ENCODE measurements at regions of chr16 and their contacts with region 1.

Region 1: GRCh38 chr16:4271176-4272066 is 1.4 kb downstream of the TFAP4 start:
- DNase-seq: peak; percentile 84
- ATAC-seq: peak; percentile 80
- H3K4me3 ChIP-seq: peak overlapping the region; percentile 90
- H3K27ac ChIP-seq: peak overlapping the region; percentile 96
- H3K4me1 ChIP-seq: peaks cover 15% of the 10 kb centered on the region
- H3K27me3 ChIP-seq: no peaks in the 10 kb centered on the region
- CTCF ChIP-seq: no peak

Region 2: GRCh38 chr16:4220358-4220757 is 51.1 kb before region 1 on chr16:
- CTCF ChIA-PET with region 1: no interaction called
- POLR2A ChIA-PET with region 1: no interaction called
- intact Hi-C with region 1: no loop called
- DNase-seq: no peak
- ATAC-seq: no peak
- H3K4me3 ChIP-seq: no peak overlapping the region
- H3K27ac ChIP-seq: no peak overlapping the region
- H3K4me1 ChIP-seq: no peaks in the 10 kb centered on the region
- H3K27me3 ChIP-seq: no peaks in the 10 kb centered on the region
- CTCF ChIP-seq: no peak

Region 3: GRCh38 chr16:4303872-4304725 is 32.7 kb after region 1 on chr16:
- CTCF ChIA-PET with region 1: no interaction called
- POLR2A ChIA-PET with region 1: interaction called, 14 read pairs
- intact Hi-C with region 1: no loop called
- DNase-seq: no peak
- ATAC-seq: no peak
- H3K4me3 ChIP-seq: no peak overlapping the region
- H3K27ac ChIP-seq: no peak overlapping the region
- H3K4me1 ChIP-seq: peaks cover 19% of the 10 kb centered on the region
- H3K27me3 ChIP-seq: no peaks in the 10 kb centered on the region
- CTCF ChIP-seq: no peak

Region 4: GRCh38 chr16:4315186-4316109 is 44.0 kb after region 1 on chr16 and contains the start of gene GLIS2:
- CTCF ChIA-PET with region 1: no interaction called
- POLR2A ChIA-PET with region 1: interaction called, 3 read pairs
- intact Hi-C with region 1: loop called (anchors 5 kb)
- DNase-seq: peak; percentile 57
- ATAC-seq: peak; percentile 35
- H3K4me3 ChIP-seq: peak within 1 kb of the TSS; percentile 75
- H3K27ac ChIP-seq: no peak within 1 kb of the TSS
- H3K4me1 ChIP-seq: peaks cover 10% of the 10 kb centered on the region
- H3K27me3 ChIP-seq: no peaks in the 10 kb centered on the region
- CTCF ChIP-seq: no peak
- total RNA-seq, gene GLIS2: 2.1 and 5.9 TPM in 2 replicates